Prostate gland (tissue), 2 donors: ENCODE measurements at regions of chrX and their contacts with region 1.

Region 1: GRCh38 chrX:43958529-43958928 is 14.7 kb downstream of the NDP start:
- DNase-seq: peak; percentile 48
- H3K4me3 ChIP-seq: no peak overlapping the region
- H3K27ac ChIP-seq: no peak overlapping the region
- H3K4me1 ChIP-seq: no peaks in the 10 kb centered on the region
- H3K27me3 ChIP-seq: no peaks in the 10 kb centered on the region
- CTCF ChIP-seq: peak; percentile 12 to 83 (median 66)
- POLR2A ChIP-seq: no peak

Region 2: GRCh38 chrX:44025555-44025954 is 67.0 kb after region 1 on chrX:
- intact Hi-C with region 1: loop called (anchors 5 kb)
- DNase-seq: no peak
- H3K4me3 ChIP-seq: no peak overlapping the region
- H3K27ac ChIP-seq: no peak overlapping the region
- H3K4me1 ChIP-seq: no peaks in the 10 kb centered on the region
- H3K27me3 ChIP-seq: no peaks in the 10 kb centered on the region
- CTCF ChIP-seq: no peak
- POLR2A ChIP-seq: no peak

Region 3: GRCh38 chrX:44244008-44244407 is 285.5 kb after region 1 on chrX:
- intact Hi-C with region 1: loop called (anchors 5 kb)
- DNase-seq: no peak
- H3K4me3 ChIP-seq: no peak overlapping the region
- H3K27ac ChIP-seq: no peak overlapping the region
- H3K4me1 ChIP-seq: no peaks in the 10 kb centered on the region
- H3K27me3 ChIP-seq: no peaks in the 10 kb centered on the region
- CTCF ChIP-seq: peak; percentile 15 to 51 (median 45)
- POLR2A ChIP-seq: no peak

Region 4: GRCh38 chrX:44343412-44344141 is 385.0 kb after region 1 on chrX and contains the start of gene EFHC2:
- intact Hi-C with region 1: loop called (anchors 10 kb)
- DNase-seq: peak; percentile 5
- H3K4me3 ChIP-seq: peak within 1 kb of the TSS; percentile 32 to 37
- H3K27ac ChIP-seq: peak within 1 kb of the TSS in 1 of 2 donors; percentile 11
- H3K4me1 ChIP-seq: no peaks in the 10 kb centered on the region
- H3K27me3 ChIP-seq: no peaks in the 10 kb centered on the region
- CTCF ChIP-seq: no peak
- POLR2A ChIP-seq: no peak
- total RNA-seq, gene EFHC2: 3.0 to 6.2 TPM

Region 5: DNA sequence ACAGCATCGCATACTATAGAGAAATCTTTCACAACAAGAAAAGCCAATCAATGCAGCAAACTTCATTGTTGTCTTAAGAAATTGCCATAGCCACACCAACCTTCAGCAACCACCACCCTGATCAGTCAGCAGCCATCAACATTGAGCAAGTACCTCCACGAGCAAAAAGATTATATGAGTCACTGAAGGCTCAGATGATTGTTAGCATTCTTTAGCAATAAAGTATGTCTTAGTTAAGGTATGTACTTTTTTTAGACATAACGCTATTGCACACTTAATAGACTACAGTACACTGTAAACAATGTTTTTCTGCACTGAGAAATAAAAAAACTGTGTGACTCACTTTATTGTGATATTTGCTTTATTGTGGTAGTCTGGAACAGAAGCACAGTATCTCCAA is 621.9 kb after region 1 on chrX:
- intact Hi-C with region 1: no loop called
- DNase-seq: no peak
- H3K4me3 ChIP-seq: no peak overlapping the region
- H3K27ac ChIP-seq: no peak overlapping the region
- H3K4me1 ChIP-seq: no peaks in the 10 kb centered on the region
- H3K27me3 ChIP-seq: no peaks in the 10 kb centered on the region
- CTCF ChIP-seq: no peak
- POLR2A ChIP-seq: no peak